BJ (cell line): ENCODE measurements at regions of chr10 and their contacts with region 1.

Region 1: GRCh38 chr10:126387023-126387921 is 1.0 kb downstream of the ADAM12 start:
- DNase-seq: peak; percentile 35
- H3K4me3 ChIP-seq: peak overlapping the region; percentile 60
- H3K27me3 ChIP-seq: no peaks in the 10 kb centered on the region
- CTCF ChIP-seq: peak; percentile 93

Region 2: DNA sequence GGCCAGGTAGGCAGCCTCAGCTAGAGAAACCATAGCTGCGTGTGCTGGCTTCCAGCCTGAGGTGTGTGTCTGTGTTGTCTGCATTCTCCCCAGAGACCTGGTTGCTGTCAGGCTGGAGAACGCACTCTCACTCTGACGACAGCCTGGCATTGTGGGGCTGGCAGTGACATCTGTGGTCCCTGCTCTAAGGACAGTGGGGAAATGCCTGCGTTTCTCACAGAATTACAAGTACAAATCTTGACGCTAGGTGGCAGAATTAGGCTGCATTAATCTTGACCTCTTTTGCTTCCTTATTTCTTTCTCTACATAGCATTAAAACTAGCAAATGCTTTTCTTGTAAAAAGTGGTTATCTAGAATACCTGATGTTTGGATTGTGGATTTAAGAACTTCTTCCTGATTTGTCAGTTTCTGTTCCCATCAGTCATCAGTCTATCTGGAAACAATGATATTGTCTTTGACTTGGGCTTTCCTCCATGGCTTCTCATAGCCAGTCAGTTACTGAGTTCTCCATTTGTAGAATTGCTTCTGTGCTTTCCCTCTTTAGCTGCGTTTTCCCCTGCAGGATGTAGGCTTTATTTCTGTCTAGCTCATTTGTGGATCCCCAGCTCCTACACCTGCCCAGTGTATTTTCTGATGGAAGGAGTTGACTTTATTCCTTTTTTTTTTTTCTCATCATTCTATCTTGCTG is 404.9 kb before region 1 on chr10:
- CTCF ChIA-PET with region 1: interaction called, 32 read pairs
- POLR2A ChIA-PET with region 1: no interaction called
- DNase-seq: peak; percentile 15
- H3K4me3 ChIP-seq: no peak overlapping the region
- H3K27me3 ChIP-seq: no peaks in the 10 kb centered on the region
- CTCF ChIP-seq: peak; percentile 45